ENCODE measurements at regions of chr1 and their contacts with region 1.

Region 1: DNA sequence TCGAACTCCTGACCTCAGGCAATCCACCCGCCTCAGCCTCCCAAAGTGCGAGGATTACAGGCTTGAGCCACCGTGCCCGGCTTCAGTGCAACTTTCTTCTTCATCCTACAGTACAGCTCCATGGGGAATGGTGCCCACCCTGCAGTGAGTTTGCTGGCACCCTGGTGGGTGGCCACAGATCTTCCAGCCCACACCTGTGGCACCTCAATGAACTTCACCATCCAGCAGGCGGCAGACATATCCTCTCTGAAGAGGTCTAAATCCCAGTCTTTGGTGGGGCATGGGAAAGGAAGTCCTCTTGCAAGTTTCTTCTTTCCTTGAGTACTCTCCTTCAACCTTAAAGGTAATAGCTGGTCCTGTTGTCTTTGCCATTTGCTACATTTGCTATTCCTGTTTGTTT is 18.1 kb upstream of the ZBTB8A start:
- DNase-seq: no peak
- H3K4me3 ChIP-seq: no peak overlapping the region
- H3K27ac ChIP-seq: no peak overlapping the region
- H3K4me1 ChIP-seq: no peaks in the 10 kb centered on the region
- H3K27me3 ChIP-seq: peaks cover 0 to 2% of the 10 kb centered on the region in 2 experiments
- CTCF ChIP-seq: no peak
- POLR2A ChIP-seq: no peak

Region 2: GRCh38 chr1:32400876-32401631 is 120.1 kb before region 1 on chr1:
- CTCF ChIA-PET with region 1: interaction called, 13 read pairs
- POLR2A ChIA-PET with region 1: no interaction called
- dilution Hi-C with region 1: no loop called
- intact Hi-C with region 1: no loop called
- DNase-seq: peak; percentile 65
- H3K4me3 ChIP-seq: no peak overlapping the region
- H3K27ac ChIP-seq: no peak overlapping the region
- H3K4me1 ChIP-seq: no peaks in the 10 kb centered on the region
- H3K27me3 ChIP-seq: no peaks in the 10 kb centered on the region
- CTCF ChIP-seq: peak; percentile 88 to 90
- POLR2A ChIP-seq: no peak

Region 3: GRCh38 chr1:32500387-32501209 is 20.6 kb before region 1 on chr1:
- CTCF ChIA-PET with region 1: interaction called, 32 read pairs
- POLR2A ChIA-PET with region 1: interaction called, 5 read pairs
- dilution Hi-C with region 1: no loop called
- intact Hi-C with region 1: no loop called
- DNase-seq: peak; percentile 49
- H3K4me3 ChIP-seq: peak overlapping the region; percentile 48 to 83 (median 74)
- H3K27ac ChIP-seq: peak overlapping the region; percentile 55
- H3K4me1 ChIP-seq: peaks cover 30% of the 10 kb centered on the region
- H3K27me3 ChIP-seq: no peaks in the 10 kb centered on the region
- CTCF ChIP-seq: no peak
- POLR2A ChIP-seq: peak; percentile 73

Region 4: DNA sequence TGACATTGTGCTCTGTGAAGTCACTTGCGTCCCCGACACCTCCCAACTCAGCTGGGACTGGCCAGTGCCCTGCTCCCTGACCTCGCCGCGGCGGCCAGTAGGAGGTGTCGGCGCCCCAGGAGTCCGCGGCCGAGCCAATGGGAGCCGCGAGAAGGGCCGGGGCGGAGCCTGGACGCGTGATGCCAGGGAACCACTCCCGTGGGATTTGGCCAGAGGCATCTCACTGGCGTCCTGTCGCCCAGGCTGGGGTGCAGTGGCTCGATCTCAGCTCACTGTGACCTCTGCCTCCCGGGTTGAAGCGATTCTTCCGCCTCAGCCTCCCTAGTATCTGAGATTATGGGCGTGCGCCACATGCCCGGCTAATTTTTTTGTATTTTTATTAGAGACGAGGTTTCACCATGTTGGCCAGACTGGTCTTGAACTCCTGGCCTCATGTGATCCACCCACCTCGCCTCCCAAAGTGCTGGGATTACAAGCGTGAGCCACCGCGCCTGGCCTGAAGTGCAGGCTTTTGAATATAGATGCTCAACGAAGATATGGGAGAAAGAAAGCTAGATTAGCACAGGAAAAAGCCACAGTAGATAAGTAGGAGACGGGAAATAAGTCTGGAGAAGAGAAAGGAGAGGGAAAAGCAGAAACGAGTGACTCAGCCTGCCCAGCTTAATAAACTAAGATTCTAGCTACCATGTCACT is 91.2 kb after region 1 on chr1:
- CTCF ChIA-PET with region 1: interaction called, 10 read pairs
- POLR2A ChIA-PET with region 1: no interaction called
- dilution Hi-C with region 1: no loop called
- intact Hi-C with region 1: no loop called
- DNase-seq: peak; percentile 86
- H3K4me3 ChIP-seq: peak overlapping the region; percentile 9 to 48 (median 44)
- H3K27ac ChIP-seq: peak overlapping the region; percentile 29
- H3K4me1 ChIP-seq: no peaks in the 10 kb centered on the region
- H3K27me3 ChIP-seq: no peaks in the 10 kb centered on the region
- CTCF ChIP-seq: peak in 1 of 2 donors; percentile 56
- POLR2A ChIP-seq: peak; percentile 90

Region 5: GRCh38 chr1:32650752-32651460 is 129.7 kb after region 1 on chr1 and contains the start of gene RBBP4:
- CTCF ChIA-PET with region 1: interaction called, 12 read pairs
- POLR2A ChIA-PET with region 1: no interaction called
- dilution Hi-C with region 1: no loop called
- intact Hi-C with region 1: loop called (anchors 1 kb)
- DNase-seq: peak; percentile 98
- H3K4me3 ChIP-seq: peak within 1 kb of the TSS; percentile 65 to 90 (median 68)
- H3K27ac ChIP-seq: peak within 1 kb of the TSS; percentile 95
- H3K4me1 ChIP-seq: peaks cover 18% of the 10 kb centered on the region
- H3K27me3 ChIP-seq: no peaks in the 10 kb centered on the region
- CTCF ChIP-seq: no peak
- POLR2A ChIP-seq: peak; percentile 85
- total RNA-seq, gene RBBP4: 228 and 241 TPM in 2 replicates

Region 6: GRCh38 chr1:32718527-32718926 is 197.4 kb after region 1 on chr1:
- CTCF ChIA-PET with region 1: no interaction called
- POLR2A ChIA-PET with region 1: no interaction called
- dilution Hi-C with region 1: no loop called
- intact Hi-C with region 1: no loop called
- DNase-seq: no peak
- H3K4me3 ChIP-seq: no peak overlapping the region
- H3K27ac ChIP-seq: no peak overlapping the region
- H3K4me1 ChIP-seq: no peaks in the 10 kb centered on the region
- H3K27me3 ChIP-seq: no peaks in the 10 kb centered on the region
- CTCF ChIP-seq: no peak
- POLR2A ChIP-seq: no peak

Region 7: GRCh38 chr1:32773018-32773763 is 252.0 kb after region 1 on chr1:
- CTCF ChIA-PET with region 1: interaction called, 11 read pairs
- POLR2A ChIA-PET with region 1: no interaction called
- dilution Hi-C with region 1: no loop called
- intact Hi-C with region 1: loop called (anchors 1 kb)
- DNase-seq: peak; percentile 66
- H3K4me3 ChIP-seq: no peak overlapping the region
- H3K27ac ChIP-seq: no peak overlapping the region
- H3K4me1 ChIP-seq: peaks cover 21% of the 10 kb centered on the region
- H3K27me3 ChIP-seq: no peaks in the 10 kb centered on the region
- CTCF ChIP-seq: peak; percentile 92 to 95
- POLR2A ChIP-seq: no peak

Region 8: GRCh38 chr1:32886004-32886827 is 365.1 kb after region 1 on chr1 and contains the start of gene HPCA:
- CTCF ChIA-PET with region 1: no interaction called
- POLR2A ChIA-PET with region 1: no interaction called
- dilution Hi-C with region 1: no loop called
- intact Hi-C with region 1: no loop called
- DNase-seq: peak; percentile 46
- H3K4me3 ChIP-seq: peak within 1 kb of the TSS in 1 of 3 experiments; percentile 7
- H3K27ac ChIP-seq: no peak within 1 kb of the TSS
- H3K4me1 ChIP-seq: no peaks in the 10 kb centered on the region
- H3K27me3 ChIP-seq: peaks cover 17 to 19% of the 10 kb centered on the region in 2 experiments
- CTCF ChIP-seq: peak; percentile 80 to 94
- POLR2A ChIP-seq: no peak
- total RNA-seq, gene HPCA: not detected in 2 replicates

Measured in endothelial cell of umbilical vein (primary cell).